ENCODE measurements at regions of chr3 and their contacts with region 1.

Region 1: DNA sequence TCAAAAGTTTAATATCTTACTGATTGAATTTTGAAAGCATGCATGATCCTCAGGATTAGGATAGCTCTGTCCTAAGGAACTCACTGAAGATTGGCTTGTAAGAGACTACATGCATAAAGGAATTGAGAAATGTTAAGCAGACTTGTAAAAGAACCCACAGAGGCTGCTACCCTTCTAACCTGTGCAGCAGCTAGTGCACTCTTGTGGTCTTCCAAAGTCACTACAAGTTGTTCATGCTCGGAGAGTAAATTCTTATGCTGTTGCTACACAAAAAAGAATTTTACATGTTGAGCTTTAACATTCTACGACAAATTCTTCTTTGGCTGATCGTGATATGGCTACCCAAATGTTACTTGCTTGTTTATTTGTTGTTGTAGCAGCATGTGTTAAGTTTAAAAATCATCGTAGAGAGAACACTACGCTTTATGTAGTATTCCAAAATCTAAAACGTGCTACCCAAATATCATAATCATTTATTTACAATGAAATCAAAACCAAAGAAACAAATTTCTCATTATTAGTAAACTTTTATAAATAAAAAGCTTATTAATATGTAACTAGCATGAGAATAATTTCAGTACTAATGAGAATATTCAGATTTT is 55.0 kb downstream of the GOLIM4 start:
- DNase-seq: peak; percentile 22
- H3K4me3 Mint-ChIP-seq: no peak overlapping the region
- H3K27ac Mint-ChIP-seq: no peak overlapping the region
- H3K4me1 Mint-ChIP-seq: no peaks in the 10 kb centered on the region
- H3K27me3 Mint-ChIP-seq: no peaks in the 10 kb centered on the region
- CTCF ChIP-seq: peak; percentile 80

Region 2: DNA sequence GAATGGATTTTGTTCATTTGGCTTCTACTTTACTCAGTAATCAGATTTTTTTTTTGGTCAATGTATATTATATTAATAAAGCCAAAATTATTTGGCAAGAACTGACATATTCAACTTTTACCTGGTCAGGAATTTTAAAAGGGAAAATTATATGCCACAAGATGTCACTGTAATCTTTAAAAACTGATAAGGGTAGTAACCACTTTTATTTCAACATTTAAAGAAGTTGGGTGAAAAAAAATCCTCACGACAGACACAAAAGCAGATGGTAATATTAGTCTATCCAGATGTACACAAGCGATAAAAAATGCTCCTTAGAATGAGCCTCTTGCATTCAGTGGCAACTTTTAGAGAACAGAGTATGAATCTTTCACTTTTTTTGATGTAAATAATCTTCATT is 203.2 kb before region 1 on chr3:
- CTCF ChIA-PET with region 1: no interaction called
- intact Hi-C with region 1: loop called (anchors 2 kb)
- DNase-seq: no peak
- H3K4me3 Mint-ChIP-seq: no peak overlapping the region
- H3K27ac Mint-ChIP-seq: no peak overlapping the region
- H3K4me1 Mint-ChIP-seq: no peaks in the 10 kb centered on the region
- H3K27me3 Mint-ChIP-seq: no peaks in the 10 kb centered on the region
- CTCF ChIP-seq: no peak

Region 3: DNA sequence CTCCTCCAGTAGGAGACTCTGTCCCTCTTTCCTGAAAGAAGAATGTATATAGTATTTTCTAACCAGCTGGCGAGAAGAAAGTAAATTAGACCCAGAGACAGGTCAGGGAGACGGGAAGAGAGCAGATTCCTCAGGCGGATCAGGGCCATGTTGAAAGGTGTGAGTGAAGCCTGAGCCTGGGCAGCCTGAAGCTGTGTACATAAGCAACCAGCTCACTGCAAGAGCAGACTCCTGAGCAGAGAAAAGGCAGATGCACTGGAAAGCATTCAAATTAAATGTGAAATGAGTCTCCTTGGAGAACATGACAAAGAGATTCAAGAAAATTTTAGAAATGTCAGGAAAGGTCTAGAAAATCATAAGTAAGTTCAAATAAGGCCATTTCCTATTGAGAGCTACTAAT is 110.7 kb before region 1 on chr3:
- CTCF ChIA-PET with region 1: interaction called, 4 read pairs
- intact Hi-C with region 1: loop called (anchors 1 kb)
- DNase-seq: no peak
- H3K4me3 Mint-ChIP-seq: no peak overlapping the region
- H3K27ac Mint-ChIP-seq: no peak overlapping the region
- H3K4me1 Mint-ChIP-seq: no peaks in the 10 kb centered on the region
- H3K27me3 Mint-ChIP-seq: no peaks in the 10 kb centered on the region
- CTCF ChIP-seq: no peak